Calu3 (cell line): ENCODE measurements at regions of chrX and their contacts with region 1.

Region 1: DNA sequence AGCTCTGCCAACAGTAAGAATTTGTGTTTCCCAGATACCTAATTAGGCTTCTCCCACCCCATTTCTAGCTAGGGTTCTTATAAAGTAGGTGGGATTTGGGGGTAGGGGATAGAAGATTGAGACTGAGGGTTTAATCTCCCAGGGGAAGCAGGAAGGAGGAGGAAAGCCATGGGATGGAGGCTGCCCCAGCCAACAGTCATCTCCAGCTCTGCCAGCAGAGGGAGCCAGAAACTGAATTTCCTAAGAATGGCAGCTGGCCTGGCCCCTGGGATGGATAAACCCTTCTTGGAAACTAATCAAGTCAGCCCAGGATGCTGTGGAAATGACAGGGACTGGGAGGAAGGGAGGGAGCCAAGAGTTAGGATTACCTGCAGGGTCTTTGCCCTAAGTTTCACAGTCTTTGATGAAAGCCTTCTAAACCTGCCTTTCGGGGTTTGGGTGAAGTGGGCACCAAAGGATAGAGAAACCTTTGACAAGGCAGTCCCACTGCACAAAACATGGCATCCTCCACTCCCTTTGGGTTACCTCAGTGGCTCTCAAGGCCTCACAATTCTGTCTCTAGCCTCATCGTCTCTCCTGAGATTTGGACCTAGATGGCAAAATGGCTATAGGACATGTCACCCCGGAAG is 6.7 kb upstream of the ERCC6L start:
- DNase-seq: peak; percentile 75
- H3K4me3 Mint-ChIP-seq: no peak overlapping the region
- H3K27ac Mint-ChIP-seq: no peak overlapping the region
- H3K4me1 Mint-ChIP-seq: peaks cover 16% of the 10 kb centered on the region
- H3K27me3 Mint-ChIP-seq: no peaks in the 10 kb centered on the region
- CTCF ChIP-seq: peak; percentile 46

Region 2: GRCh38 chrX:72107320-72107719 is 138.3 kb before region 1 on chrX:
- CTCF ChIA-PET with region 1: no interaction called
- intact Hi-C with region 1: no loop called
- DNase-seq: no peak
- H3K4me3 Mint-ChIP-seq: no peak overlapping the region
- H3K27ac Mint-ChIP-seq: no peak overlapping the region
- H3K4me1 Mint-ChIP-seq: no peaks in the 10 kb centered on the region
- H3K27me3 Mint-ChIP-seq: peaks cover 62% of the 10 kb centered on the region
- CTCF ChIP-seq: no peak

Region 3: DNA sequence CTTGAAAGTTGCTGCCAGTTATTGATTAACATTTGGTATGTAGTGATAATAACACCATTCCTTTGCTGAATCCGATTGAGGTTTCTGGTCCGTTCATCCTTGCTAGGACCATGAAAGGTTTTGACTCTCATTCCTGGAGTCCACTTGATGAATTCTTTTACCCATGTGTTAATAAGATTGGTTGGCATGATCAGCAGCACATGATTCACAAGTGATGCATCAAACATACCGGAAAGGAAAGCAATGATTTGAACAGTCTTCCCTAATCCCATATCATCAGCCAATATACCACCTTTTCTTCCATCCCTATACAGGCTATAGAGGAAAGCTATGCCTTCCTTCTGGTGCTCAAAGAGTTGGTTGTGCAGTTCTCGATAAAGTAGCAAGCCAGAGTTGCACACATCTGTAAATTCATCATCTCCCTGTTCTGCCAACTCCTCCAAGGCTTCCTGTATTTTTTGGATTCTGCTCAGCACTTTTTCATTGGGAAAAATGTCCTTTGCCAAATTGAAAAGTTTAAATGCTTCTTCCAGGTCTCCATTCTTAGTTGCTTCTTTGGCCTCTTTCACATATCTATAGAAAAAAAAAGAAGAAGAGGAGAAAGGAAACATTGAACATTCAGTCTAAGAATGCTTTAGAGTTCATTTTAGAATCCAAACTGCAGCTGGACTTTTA is 37.3 kb before region 1 on chrX:
- CTCF ChIA-PET with region 1: no interaction called
- intact Hi-C with region 1: no loop called
- DNase-seq: no peak
- H3K4me3 Mint-ChIP-seq: no peak overlapping the region
- H3K27ac Mint-ChIP-seq: no peak overlapping the region
- H3K4me1 Mint-ChIP-seq: no peaks in the 10 kb centered on the region
- H3K27me3 Mint-ChIP-seq: no peaks in the 10 kb centered on the region
- CTCF ChIP-seq: no peak

Region 4: GRCh38 chrX:72276478-72276953 is 30.9 kb after region 1 on chrX:
- CTCF ChIA-PET with region 1: interaction called, 17 read pairs
- intact Hi-C with region 1: no loop called
- DNase-seq: no peak
- H3K4me3 Mint-ChIP-seq: peak overlapping the region; percentile 83
- H3K27ac Mint-ChIP-seq: peak overlapping the region; percentile 95
- H3K4me1 Mint-ChIP-seq: peaks cover 32% of the 10 kb centered on the region
- H3K27me3 Mint-ChIP-seq: peaks cover 29% of the 10 kb centered on the region
- CTCF ChIP-seq: no peak

Region 5: GRCh38 chrX:72540318-72540717 is 294.7 kb after region 1 on chrX:
- CTCF ChIA-PET with region 1: no interaction called
- intact Hi-C with region 1: loop called (anchors 2 kb)
- DNase-seq: no peak
- H3K4me3 Mint-ChIP-seq: no peak overlapping the region
- H3K27ac Mint-ChIP-seq: no peak overlapping the region
- H3K4me1 Mint-ChIP-seq: peaks cover 8% of the 10 kb centered on the region
- H3K27me3 Mint-ChIP-seq: no peaks in the 10 kb centered on the region
- CTCF ChIP-seq: no peak